H1 (cell line): ENCODE measurements at regions of chr6 and their contacts with region 1.

Region 1: GRCh38 chr6:166032366-166033171 is 135.1 kb downstream of the TBXT start:
- DNase-seq: peak in 1 of 2 experiments; percentile 59
- H3K4me3 ChIP-seq: no peak overlapping the region
- H3K27ac ChIP-seq: 0 out of 2 replicates have a peak overlapping the region, but pooled peaks have one; percentile 53
- H3K4me1 ChIP-seq: peaks cover 0 to 4% (median 3%) of the 10 kb centered on the region in 4 experiments; a peak in 6 of 7 replicates
- H3K27me3 ChIP-seq: no peaks in the 10 kb centered on the region
- CTCF ChIP-seq: peak; percentile 32 to 67 (median 48); a peak in 3 of 4 replicates
- EP300 ChIP-seq: no peak
- POLR2A ChIP-seq: no peak
- RAD21 ChIP-seq: peak in 1 of 2 experiments; percentile 32; a peak in 2 of 4 replicates

Region 2: GRCh38 chr6:165766457-165766856 is 266.1 kb before region 1 on chr6:
- CTCF ChIA-PET with region 1: no interaction called
- POLR2A ChIA-PET with region 1: no interaction called
- DNase-seq: no peak
- H3K4me3 ChIP-seq: no peak overlapping the region
- H3K27ac ChIP-seq: no peak overlapping the region
- H3K4me1 ChIP-seq: no peaks in the 10 kb centered on the region
- H3K27me3 ChIP-seq: no peaks in the 10 kb centered on the region
- CTCF ChIP-seq: no peak
- EP300 ChIP-seq: no peak
- POLR2A ChIP-seq: no peak
- RAD21 ChIP-seq: no peak

Region 3: GRCh38 chr6:166005944-166006899 is 26.3 kb before region 1 on chr6:
- CTCF ChIA-PET with region 1: interaction called, 13 read pairs
- POLR2A ChIA-PET with region 1: no interaction called
- DNase-seq: peak in 1 of 2 experiments; percentile 43
- H3K4me3 ChIP-seq: peak overlapping the region; percentile 14 to 55 (median 27); a peak in 7 of 8 replicates
- H3K27ac ChIP-seq: no peak overlapping the region
- H3K4me1 ChIP-seq: peaks cover 3 to 16% (median 11%) of the 10 kb centered on the region in 4 experiments
- H3K27me3 ChIP-seq: peaks cover 44 to 77% (median 67%) of the 10 kb centered on the region in 4 experiments
- CTCF ChIP-seq: no peak
- EP300 ChIP-seq: no peak
- POLR2A ChIP-seq: no peak
- RAD21 ChIP-seq: no peak

Region 4: GRCh38 chr6:166046226-166046625 is 13.7 kb after region 1 on chr6:
- CTCF ChIA-PET with region 1: interaction called, 22 read pairs
- POLR2A ChIA-PET with region 1: no interaction called
- DNase-seq: no peak
- H3K4me3 ChIP-seq: no peak overlapping the region
- H3K27ac ChIP-seq: no peak overlapping the region
- H3K4me1 ChIP-seq: peaks cover 0 to 6% (median 0%) of the 10 kb centered on the region in 4 experiments; a peak in 1 of 7 replicates
- H3K27me3 ChIP-seq: no peaks in the 10 kb centered on the region
- CTCF ChIP-seq: no peak
- EP300 ChIP-seq: no peak
- POLR2A ChIP-seq: no peak
- RAD21 ChIP-seq: no peak

Region 5: DNA sequence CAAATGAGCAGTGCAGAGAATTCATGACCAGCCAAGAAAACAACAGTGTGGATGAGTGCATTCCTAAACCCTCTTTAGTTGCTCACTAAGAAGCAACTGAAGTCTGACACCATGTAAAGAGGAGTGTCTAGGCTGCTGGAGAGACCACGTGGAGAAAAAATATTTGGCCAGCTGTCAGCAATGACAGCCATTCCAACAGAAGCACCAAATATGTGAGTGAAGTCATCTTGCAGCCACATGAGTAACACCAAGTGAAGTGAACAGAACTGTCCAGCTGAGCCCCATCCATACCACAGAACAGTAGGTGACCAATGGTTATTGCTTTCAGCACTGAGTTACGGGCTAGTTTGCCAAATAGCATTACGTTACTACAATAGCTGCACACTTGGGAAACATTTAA is 45.7 kb after region 1 on chr6:
- CTCF ChIA-PET with region 1: interaction called, 21 read pairs
- POLR2A ChIA-PET with region 1: interaction called, 3 read pairs
- DNase-seq: no peak
- H3K4me3 ChIP-seq: no peak overlapping the region
- H3K27ac ChIP-seq: no peak overlapping the region
- H3K4me1 ChIP-seq: no peaks in the 10 kb centered on the region
- H3K27me3 ChIP-seq: no peaks in the 10 kb centered on the region
- CTCF ChIP-seq: no peak
- EP300 ChIP-seq: no peak
- POLR2A ChIP-seq: no peak
- RAD21 ChIP-seq: no peak

Region 6: DNA sequence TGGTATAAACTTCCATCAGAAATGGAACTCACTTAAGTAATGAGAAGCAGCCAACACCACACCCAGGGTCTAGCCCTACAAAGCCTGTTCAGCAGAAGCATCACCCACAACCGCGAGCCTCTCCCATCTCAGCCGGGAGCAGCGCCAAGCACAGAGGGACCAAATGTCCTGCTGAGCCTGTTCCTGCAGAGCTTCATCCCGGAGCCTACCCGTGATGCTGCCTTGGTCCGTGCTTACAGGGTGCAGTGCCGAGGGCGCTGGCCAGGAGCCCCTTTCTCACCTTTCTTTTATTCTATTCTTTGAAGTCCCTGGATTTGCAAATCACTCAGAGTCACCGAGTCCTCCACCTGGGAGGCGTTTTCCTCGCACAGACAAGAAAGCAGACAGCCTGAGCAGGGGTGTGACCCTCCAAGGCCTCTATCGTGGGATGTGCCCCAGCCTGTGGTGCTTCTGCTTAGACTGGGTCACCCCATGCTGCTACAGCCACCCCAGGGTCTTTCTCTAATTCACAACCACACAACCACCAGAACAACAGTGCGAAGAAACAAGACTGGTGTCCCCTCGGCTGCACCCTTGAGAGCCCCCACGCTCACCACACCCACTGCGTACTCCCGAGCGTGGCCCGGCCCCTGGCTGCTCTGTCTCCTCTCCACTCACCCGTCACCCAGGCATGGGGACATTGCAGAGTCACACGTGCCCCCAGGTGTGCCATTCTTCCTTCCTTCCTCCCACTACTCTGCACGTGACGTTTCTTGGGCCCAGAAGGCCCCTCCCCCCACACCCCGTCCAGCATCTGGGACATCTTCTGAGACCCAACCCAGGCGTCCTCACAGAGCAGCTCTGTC is 442.4 kb after region 1 on chr6:
- CTCF ChIA-PET with region 1: no interaction called
- POLR2A ChIA-PET with region 1: no interaction called
- DNase-seq: no peak
- H3K4me3 ChIP-seq: no peak overlapping the region
- H3K27ac ChIP-seq: no peak overlapping the region
- H3K4me1 ChIP-seq: no peaks in the 10 kb centered on the region; a peak in 1 of 7 replicates
- H3K27me3 ChIP-seq: no peaks in the 10 kb centered on the region; a peak in 1 of 7 replicates
- CTCF ChIP-seq: no peak
- EP300 ChIP-seq: no peak
- POLR2A ChIP-seq: no peak
- RAD21 ChIP-seq: no peak